ENCODE measurements at regions of chrX and their contacts with region 1.

Region 1: DNA sequence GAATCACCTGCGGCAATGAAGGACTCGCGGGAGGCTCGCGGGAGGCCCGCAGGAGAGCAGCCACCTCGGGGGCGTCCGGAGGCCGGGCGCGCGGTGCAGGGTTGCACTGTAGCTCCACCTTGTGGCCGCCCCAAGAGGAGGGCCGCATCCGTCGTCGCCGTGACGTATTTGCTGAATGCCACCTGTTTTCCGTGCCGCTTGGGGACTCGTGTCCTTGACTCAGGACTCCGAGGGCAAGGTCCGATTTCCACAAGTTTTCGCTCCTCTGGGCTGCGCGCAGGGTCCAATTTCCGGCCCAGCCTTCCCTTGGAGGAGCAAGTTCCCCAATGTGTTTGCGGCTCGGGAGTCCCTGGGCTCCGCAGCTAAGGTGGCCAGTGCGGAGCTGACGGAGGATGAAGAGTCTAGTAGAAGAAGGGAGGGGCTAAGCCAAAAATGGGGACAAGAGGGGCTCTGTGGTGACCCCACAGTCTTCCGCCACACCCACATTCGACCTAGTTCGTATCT is 10.7 kb upstream of the DLG3 start:
- DNase-seq: peak; percentile 79
- CTCF ChIP-seq: peak; percentile 62

Region 2: GRCh38 chrX:70133303-70134115 is 300.4 kb before region 1 on chrX and contains the start of gene IGBP1:
- CTCF ChIA-PET with region 1: interaction called, 15 read pairs
- POLR2A ChIA-PET with region 1: interaction called, 3 read pairs
- DNase-seq: peak; percentile 82
- CTCF ChIP-seq: peak; percentile 60

Region 3: GRCh38 chrX:70196961-70197805 is 236.7 kb before region 1 on chrX:
- CTCF ChIA-PET with region 1: interaction called, 13 read pairs
- POLR2A ChIA-PET with region 1: no interaction called
- DNase-seq: peak; percentile 34
- CTCF ChIP-seq: peak; percentile 50

Region 4: DNA sequence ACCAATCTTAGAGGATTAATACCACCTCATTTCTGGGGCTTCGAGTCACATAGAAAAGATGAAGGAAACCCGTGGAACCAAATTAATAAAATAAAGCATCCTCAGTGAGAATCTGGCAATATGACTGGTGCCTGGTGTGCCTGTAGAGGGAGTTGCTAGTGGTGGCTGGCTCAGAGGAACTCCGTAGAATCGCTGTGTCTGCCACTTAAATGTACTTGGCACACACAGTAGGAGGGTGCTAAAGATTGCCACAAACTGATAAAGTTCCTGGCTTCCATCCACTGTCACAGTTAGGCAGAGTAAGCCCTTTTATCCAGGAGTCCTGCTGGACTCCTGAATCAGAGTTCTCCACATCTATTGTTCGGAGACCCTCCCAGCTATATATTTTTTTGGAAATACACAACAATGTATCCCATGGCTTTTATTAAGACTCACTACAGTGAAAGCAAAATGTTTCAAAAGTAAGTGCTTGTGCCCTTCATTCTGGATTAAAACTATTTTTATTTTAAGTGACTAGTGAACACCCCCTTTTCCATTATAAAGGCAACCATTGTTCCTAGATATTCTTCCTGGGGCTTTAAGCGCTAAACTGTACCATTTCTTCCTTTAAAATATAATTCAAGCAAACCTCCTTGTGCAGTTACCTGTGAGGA is 87.4 kb before region 1 on chrX:
- CTCF ChIA-PET with region 1: no interaction called
- POLR2A ChIA-PET with region 1: no interaction called
- DNase-seq: no peak
- CTCF ChIP-seq: no peak

Region 5: GRCh38 chrX:70422851-70423341 is 11.0 kb before region 1 on chrX and contains the start of gene GDPD2:
- CTCF ChIA-PET with region 1: interaction called, 16 read pairs
- POLR2A ChIA-PET with region 1: no interaction called
- DNase-seq: no peak
- CTCF ChIP-seq: no peak

Region 6: DNA sequence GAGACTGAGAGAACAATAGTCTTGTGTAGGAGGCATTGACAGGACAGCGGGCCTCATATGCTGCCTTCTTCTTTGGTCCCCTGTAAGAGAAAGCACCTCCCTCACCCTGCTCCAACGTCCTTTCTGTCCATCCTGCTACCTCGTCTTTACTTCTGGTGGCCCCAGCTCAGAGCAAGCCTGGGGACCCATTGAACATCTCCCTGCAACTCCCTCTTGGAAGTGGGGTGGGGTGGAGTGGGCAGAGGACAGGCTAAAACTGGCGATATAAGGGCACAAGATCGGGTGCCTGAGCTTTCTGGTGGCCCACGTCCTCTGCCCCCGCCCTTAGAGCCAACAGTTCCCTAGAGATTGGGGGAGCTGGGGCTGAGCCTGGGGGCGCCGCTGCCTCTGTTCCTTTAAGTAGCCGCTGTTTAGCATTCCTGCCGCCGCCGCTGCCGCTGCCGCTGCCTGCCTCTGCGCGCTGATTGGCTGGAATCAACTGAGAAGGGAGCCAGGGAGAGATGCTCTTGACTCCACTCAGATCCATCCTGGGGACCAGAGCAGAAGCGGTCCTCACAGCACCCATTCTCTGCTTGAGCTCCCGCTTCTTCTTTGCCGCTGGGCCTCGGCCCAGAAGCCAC is 10.5 kb after region 1 on chrX and contains the start of gene DLG3:
- CTCF ChIA-PET with region 1: interaction called, 15 read pairs
- POLR2A ChIA-PET with region 1: no interaction called
- DNase-seq: peak; percentile 10
- CTCF ChIP-seq: no peak

Region 7: GRCh38 chrX:70452143-70452733 is 18.3 kb after region 1 on chrX:
- CTCF ChIA-PET with region 1: interaction called, 14 read pairs
- POLR2A ChIA-PET with region 1: no interaction called
- DNase-seq: peak; percentile 67
- CTCF ChIP-seq: peak; percentile 56

Region 8: GRCh38 chrX:70525733-70526132 is 91.8 kb after region 1 on chrX:
- CTCF ChIA-PET with region 1: no interaction called
- POLR2A ChIA-PET with region 1: no interaction called
- DNase-seq: no peak
- CTCF ChIP-seq: no peak